ENCODE measurements at regions of chr6 and their contacts with region 1.

Region 1: DNA sequence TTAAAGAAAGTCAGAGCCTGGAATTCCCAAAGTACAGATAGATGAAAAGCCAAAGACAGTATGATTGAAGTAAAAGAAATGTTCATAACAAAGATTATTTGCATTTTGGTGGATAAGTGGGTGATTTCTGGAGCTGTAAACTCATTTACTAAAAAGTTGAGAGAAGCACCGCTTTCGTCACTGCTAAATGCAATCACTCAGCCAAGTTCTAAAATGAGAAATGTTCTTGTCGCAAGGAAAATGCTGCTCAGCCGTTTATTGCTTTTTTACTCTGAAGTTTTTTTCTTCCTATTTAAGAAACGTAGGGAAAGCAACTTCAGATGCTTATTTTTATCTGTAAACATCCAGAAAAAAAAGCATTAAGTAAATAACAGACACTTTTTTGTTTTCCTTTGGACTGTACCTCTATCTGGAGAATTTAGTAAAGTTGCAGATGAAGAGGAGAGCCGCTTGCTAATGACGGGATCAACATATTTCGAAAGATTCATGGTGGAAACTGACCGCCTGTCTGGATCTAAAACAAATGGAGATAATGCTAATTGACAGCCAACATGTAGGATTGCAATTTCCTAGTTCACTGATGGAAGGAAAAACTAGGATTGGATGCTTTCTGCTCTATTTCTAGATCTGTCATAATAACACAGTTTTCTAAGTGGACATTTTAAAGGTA is 93.8 kb upstream of the BCLAF1 start:
- DNase-seq: no peak
- ATAC-seq: no peak
- H3K4me3 ChIP-seq: no peak overlapping the region
- H3K27ac ChIP-seq: no peak overlapping the region
- H3K4me1 ChIP-seq: no peaks in the 10 kb centered on the region; the same call in 1 of the 2 replicates
- H3K27me3 ChIP-seq: peaks cover 2% of the 10 kb centered on the region; the same call in 1 of the 2 replicates
- CTCF ChIP-seq: no peak
- POLR2A ChIP-seq: no peak
- RAD21 ChIP-seq: no peak

Region 2: DNA sequence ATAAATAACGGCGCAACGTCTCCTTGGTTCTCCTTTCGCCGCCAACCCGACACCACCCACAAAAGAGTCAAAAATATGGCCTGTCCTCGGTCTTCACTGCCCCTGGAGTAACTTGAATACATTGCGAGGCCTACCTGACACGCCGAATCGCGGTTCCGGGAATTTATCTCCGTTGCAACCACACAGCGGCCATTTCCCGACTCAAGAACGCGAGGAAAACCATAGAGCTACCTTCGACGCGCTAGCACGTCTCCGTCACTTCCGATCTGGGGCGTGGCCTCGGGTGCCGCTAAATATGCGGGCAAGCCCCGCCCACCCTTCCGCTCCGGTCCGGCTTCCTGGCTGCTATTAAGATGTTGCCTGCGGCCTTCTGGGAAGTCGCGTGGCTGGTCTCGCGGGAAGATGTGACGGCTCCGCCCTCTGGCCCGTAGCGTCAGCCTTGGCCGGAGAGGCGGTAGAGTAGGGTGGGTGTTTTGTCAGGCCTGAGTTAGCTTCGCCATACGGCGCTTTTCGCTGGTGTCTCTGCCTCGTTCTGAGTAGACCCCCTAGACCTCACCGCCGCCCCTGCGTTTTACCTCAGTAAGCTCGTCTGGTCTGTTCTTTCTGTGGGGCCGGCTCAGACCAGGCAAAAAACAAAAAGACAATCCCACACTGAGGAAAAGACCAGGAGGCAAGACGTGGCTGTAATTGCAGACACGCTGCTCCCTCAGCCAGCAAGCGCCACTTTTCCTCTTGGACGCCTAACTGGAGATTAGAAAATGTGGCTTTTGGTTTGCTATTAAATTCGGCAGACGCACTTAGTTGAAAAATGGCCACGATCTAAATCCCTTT is 93.6 kb before region 1 on chr6 and contains the start of gene BCLAF1:
- CTCF ChIA-PET with region 1: no interaction called
- POLR2A ChIA-PET with region 1: interaction called, 11 read pairs
- dilution Hi-C with region 1: no loop called
- in situ Hi-C with region 1: no loop called
- intact Hi-C with region 1: no loop called
- DNase-seq: peak; percentile 99
- ATAC-seq: peak; percentile 92
- H3K4me3 ChIP-seq: peak within 1 kb of the TSS; percentile 71
- H3K27ac ChIP-seq: peak within 1 kb of the TSS; percentile 96
- H3K4me1 ChIP-seq: peaks cover 5% of the 10 kb centered on the region
- H3K27me3 ChIP-seq: no peaks in the 10 kb centered on the region; the same call in 1 of the 2 replicates
- CTCF ChIP-seq: no peak
- POLR2A ChIP-seq: peak; percentile 98
- RAD21 ChIP-seq: no peak
- total RNA-seq, gene BCLAF1: 141 and 142 TPM in 2 replicates

Region 3: GRCh38 chr6:137086031-137086430 is 702.6 kb after region 1 on chr6:
- CTCF ChIA-PET with region 1: no interaction called
- POLR2A ChIA-PET with region 1: no interaction called
- dilution Hi-C with region 1: no loop called
- in situ Hi-C with region 1: no loop called
- intact Hi-C with region 1: no loop called
- DNase-seq: no peak
- ATAC-seq: no peak
- H3K4me3 ChIP-seq: no peak overlapping the region
- H3K27ac ChIP-seq: no peak overlapping the region
- H3K4me1 ChIP-seq: no peaks in the 10 kb centered on the region
- H3K27me3 ChIP-seq: peaks cover 10% of the 10 kb centered on the region
- CTCF ChIP-seq: no peak
- POLR2A ChIP-seq: no peak
- RAD21 ChIP-seq: no peak

Region 4: DNA sequence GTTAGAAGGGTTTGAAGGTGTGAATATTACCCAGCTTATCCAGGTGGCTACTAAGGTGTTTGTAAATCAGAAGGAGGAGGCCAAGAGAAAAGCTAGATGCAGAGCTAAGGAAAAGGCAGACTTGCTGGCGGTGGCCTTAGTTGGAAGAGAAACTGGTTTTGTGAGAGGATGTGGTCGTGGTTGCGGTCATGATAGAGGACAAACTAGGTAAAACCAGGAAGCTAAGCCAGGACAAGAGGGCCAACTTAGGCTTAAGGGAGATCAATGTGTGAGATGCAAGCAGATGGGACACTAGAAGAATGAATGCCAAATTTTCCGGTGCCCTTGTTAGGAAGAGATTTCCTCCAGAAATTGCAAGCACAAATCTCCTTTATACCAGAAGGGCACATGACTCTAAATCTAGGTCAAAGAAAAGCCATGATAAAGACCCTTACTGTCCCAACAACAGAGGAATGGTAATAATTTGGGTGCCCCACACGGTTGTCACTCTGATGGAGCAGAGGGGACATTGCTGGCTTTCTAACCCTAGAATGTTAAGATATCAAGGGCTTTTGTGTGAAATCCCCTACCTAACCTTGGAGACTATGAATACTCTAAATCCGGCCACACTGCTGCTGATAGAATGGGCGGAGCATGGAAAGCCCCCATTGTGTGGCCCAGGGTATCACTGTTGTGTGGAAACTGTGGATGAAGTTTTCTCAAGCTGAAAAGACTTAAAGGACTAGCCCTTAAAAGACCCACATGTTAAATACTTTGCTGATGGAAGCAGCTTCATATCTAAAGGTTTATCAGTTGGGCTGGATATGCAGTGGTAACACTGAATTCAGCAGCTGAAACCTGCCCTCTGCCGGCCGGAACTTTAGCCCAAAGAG is 782.2 kb after region 1 on chr6:
- CTCF ChIA-PET with region 1: no interaction called
- POLR2A ChIA-PET with region 1: no interaction called
- dilution Hi-C with region 1: no loop called
- in situ Hi-C with region 1: no loop called
- intact Hi-C with region 1: no loop called
- DNase-seq: no peak
- ATAC-seq: no peak
- H3K4me3 ChIP-seq: no peak overlapping the region
- H3K27ac ChIP-seq: no peak overlapping the region
- H3K4me1 ChIP-seq: no peaks in the 10 kb centered on the region
- H3K27me3 ChIP-seq: peaks cover 5% of the 10 kb centered on the region; the same call in 1 of the 2 replicates
- CTCF ChIP-seq: peak; percentile 22; the same call in 1 of the 2 replicates
- POLR2A ChIP-seq: no peak
- RAD21 ChIP-seq: no peak